Calu3 (cell line): ENCODE measurements at regions of chr5 and their contacts with region 1.

Region 1: DNA sequence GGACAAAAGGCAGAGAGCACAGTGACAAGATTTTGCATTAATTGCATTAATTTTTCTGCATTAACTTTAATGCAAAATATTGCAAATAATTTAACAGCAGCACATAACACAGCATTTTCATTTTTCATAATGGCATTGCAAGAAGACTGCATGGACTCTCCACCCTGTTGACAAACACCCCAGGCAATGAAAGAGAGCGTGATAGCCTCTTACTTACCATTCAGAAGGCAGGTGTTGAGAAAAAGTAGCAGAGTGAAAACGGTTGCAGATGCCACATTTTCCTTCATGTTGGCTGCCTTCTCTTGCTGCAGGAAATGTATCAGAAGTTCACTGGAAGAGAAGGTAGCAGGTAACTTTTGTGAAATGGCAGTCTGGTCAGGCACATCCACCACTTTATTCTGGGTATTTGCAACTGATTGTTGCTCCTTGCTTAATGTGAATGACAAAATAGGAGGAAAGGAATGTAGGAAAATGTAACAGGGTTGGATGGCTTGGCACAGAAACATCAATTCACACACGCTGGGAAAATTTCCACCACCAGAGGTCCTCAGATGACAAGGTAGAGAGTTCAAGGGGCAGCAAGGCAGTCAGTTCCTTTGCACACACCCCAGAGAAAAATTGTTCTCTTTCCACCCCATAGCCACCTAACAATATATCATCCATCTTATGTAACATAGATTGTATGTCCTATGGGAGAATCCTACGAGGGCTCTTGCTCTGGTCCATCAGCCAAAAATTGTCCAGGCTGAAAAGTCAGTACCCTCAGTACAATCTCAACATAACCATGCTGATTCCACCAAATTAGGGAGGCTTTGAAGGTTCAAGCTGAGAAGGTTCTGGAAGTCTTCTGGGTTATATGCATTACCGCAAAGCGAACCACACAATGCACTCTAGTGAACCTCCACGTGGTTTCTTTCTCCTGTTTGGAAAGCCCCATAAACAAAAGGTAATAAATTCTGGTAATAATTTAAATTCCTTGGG is 41.9 kb upstream of the AGXT2 start:
- DNase-seq: peak; percentile 62
- H3K4me3 Mint-ChIP-seq: no peak overlapping the region
- H3K27ac Mint-ChIP-seq: no peak overlapping the region
- H3K4me1 Mint-ChIP-seq: no peaks in the 10 kb centered on the region
- H3K27me3 Mint-ChIP-seq: no peaks in the 10 kb centered on the region
- CTCF ChIP-seq: peak; percentile 39

Region 2: DNA sequence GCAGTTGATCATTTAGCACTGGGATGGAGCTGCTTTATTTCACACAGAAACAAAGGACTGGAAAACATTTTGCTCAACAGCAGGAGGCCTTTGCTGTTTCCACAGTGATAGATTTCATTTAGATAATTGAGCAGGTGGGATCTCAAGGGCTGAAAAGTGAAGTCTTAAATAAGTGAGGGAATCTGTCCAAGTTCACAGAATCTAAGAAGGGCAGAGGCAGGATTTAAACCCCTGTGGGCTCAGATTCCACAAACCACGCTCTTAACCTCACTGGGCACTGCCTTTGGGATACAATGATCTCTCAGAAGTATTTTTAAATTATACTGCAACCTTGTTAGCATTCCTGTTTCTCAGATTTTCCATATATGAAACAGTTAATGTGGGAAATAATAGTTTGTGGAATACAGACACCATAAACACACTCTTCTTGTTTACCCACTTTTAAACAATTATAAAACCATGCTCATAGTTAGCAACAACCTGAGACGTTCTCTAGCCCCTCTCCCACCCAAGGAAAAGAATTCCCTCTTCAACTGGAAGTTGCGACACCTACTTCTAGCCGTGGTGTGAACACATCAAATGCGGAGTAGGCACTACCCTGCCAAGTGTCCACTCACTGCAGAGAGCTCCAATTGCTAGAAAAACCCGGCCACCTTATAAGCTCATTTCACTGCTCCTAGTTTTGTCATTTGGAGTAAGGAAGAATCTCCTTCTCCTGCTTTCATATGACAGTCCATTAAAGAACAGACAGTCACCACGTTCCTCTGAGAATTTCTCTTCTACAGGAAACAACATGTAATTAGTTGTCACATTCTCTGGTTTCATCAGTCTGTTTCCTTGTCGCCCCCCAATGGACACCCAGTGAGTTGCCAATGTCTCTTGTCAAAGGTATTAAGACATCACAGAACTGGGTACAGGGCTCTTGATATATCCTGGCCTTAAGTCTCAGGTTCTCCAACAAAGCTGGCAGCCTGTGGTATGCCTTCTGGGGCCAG is 93.2 kb after region 1 on chr5:
- CTCF ChIA-PET with region 1: no interaction called
- intact Hi-C with region 1: loop called (anchors 2 kb)
- DNase-seq: peak; percentile 44
- H3K4me3 Mint-ChIP-seq: no peak overlapping the region
- H3K27ac Mint-ChIP-seq: no peak overlapping the region
- H3K4me1 Mint-ChIP-seq: peaks cover 8% of the 10 kb centered on the region
- H3K27me3 Mint-ChIP-seq: peaks cover 5% of the 10 kb centered on the region
- CTCF ChIP-seq: no peak

Region 3: GRCh38 chr5:35202319-35203111 is 112.9 kb after region 1 on chr5:
- CTCF ChIA-PET with region 1: no interaction called
- intact Hi-C with region 1: loop called (anchors 1 kb)
- DNase-seq: peak; percentile 59
- H3K4me3 Mint-ChIP-seq: no peak overlapping the region
- H3K27ac Mint-ChIP-seq: no peak overlapping the region
- H3K4me1 Mint-ChIP-seq: no peaks in the 10 kb centered on the region
- H3K27me3 Mint-ChIP-seq: peaks cover 26% of the 10 kb centered on the region
- CTCF ChIP-seq: peak; percentile 29

Region 4: DNA sequence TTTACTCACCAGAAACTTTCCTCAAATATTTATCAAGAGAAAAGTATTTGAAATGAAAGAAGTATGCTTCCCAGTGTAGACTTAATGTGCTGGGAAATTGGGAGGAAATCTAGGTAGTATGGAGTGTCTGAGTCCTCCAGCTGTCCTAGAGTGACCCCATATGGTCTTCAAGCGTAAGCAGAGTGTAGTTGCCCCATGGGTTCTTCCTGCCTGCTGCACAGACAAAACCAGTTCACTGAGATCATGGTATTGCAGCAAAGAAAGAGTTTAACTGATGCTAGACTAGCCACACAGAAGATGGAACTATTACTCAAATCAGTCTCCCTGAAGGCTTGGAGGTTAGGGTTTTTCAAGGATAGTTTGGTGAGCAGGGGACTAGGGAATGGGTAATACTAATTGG is 255.6 kb after region 1 on chr5:
- CTCF ChIA-PET with region 1: no interaction called
- intact Hi-C with region 1: loop called (anchors 10 kb)
- DNase-seq: no peak
- H3K4me3 Mint-ChIP-seq: no peak overlapping the region
- H3K27ac Mint-ChIP-seq: no peak overlapping the region
- H3K4me1 Mint-ChIP-seq: no peaks in the 10 kb centered on the region
- H3K27me3 Mint-ChIP-seq: no peaks in the 10 kb centered on the region
- CTCF ChIP-seq: no peak

Region 5: GRCh38 chr5:35598707-35599370 is 509.2 kb after region 1 on chr5:
- CTCF ChIA-PET with region 1: no interaction called
- intact Hi-C with region 1: loop called (anchors 1 kb)
- DNase-seq: peak; percentile 42
- H3K4me3 Mint-ChIP-seq: no peak overlapping the region
- H3K27ac Mint-ChIP-seq: no peak overlapping the region
- H3K4me1 Mint-ChIP-seq: no peaks in the 10 kb centered on the region
- H3K27me3 Mint-ChIP-seq: no peaks in the 10 kb centered on the region
- CTCF ChIP-seq: no peak

Region 6: GRCh38 chr5:35926389-35927051 is 836.9 kb after region 1 on chr5:
- CTCF ChIA-PET with region 1: no interaction called
- intact Hi-C with region 1: loop called (anchors 1 kb)
- DNase-seq: peak; percentile 64
- H3K4me3 Mint-ChIP-seq: no peak overlapping the region
- H3K27ac Mint-ChIP-seq: no peak overlapping the region
- H3K4me1 Mint-ChIP-seq: no peaks in the 10 kb centered on the region
- H3K27me3 Mint-ChIP-seq: peaks cover 38% of the 10 kb centered on the region
- CTCF ChIP-seq: peak; percentile 79